ENCODE measurements at regions of chr4 and their contacts with region 1.

Region 1: DNA sequence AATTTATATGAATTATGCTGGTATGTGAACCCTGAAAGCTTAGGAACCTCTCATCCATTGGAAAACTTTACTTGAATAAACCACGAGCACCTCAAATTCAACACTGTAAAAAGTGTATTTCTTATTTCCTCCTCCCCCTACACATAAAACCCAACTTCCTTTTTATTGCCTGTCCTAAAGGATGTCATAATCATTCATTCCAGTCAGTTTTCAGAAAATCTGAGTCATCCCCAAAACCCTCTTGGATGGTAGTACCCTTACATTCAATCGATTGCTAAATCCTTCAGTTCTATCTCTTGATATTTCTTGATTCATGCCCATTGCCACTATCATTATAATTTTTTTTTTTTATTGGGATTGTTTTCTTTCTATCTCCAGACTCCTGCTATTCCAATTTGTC is 91.1 kb upstream of the ATP8A1 start:
- DNase-seq: no peak

Region 2: GRCh38 chr4:42673082-42673425 is 74.9 kb before region 1 on chr4:
- intact Hi-C with region 1: loop called (anchors 10 kb)
- DNase-seq: no peak

Measured in cardiac septum (tissue), 1 donor.